ENCODE measurements at regions of chr3 and their contacts with region 1.

Region 1: GRCh38 chr3:153161138-153161713 is 800 bp upstream of the RAP2B start:
- DNase-seq: peak; percentile 100
- H3K4me3 ChIP-seq: peak overlapping the region; percentile 78 to 85 (median 82)
- H3K27ac ChIP-seq: peak overlapping the region; percentile 99
- H3K4me1 ChIP-seq: peaks cover 17% of the 10 kb centered on the region
- H3K27me3 ChIP-seq: no peaks in the 10 kb centered on the region
- CTCF ChIP-seq: no peak

Region 2: GRCh38 chr3:152943645-152944044 is 217.6 kb before region 1 on chr3:
- CTCF ChIA-PET with region 1: no interaction called
- dilution Hi-C with region 1: no loop called
- in situ Hi-C with region 1: no loop called
- intact Hi-C with region 1: no loop called
- DNase-seq: peak; percentile 25
- H3K4me3 ChIP-seq: no peak overlapping the region
- H3K27ac ChIP-seq: peak overlapping the region; percentile 10
- H3K4me1 ChIP-seq: peaks cover 21% of the 10 kb centered on the region
- H3K27me3 ChIP-seq: no peaks in the 10 kb centered on the region
- CTCF ChIP-seq: no peak

Region 3: DNA sequence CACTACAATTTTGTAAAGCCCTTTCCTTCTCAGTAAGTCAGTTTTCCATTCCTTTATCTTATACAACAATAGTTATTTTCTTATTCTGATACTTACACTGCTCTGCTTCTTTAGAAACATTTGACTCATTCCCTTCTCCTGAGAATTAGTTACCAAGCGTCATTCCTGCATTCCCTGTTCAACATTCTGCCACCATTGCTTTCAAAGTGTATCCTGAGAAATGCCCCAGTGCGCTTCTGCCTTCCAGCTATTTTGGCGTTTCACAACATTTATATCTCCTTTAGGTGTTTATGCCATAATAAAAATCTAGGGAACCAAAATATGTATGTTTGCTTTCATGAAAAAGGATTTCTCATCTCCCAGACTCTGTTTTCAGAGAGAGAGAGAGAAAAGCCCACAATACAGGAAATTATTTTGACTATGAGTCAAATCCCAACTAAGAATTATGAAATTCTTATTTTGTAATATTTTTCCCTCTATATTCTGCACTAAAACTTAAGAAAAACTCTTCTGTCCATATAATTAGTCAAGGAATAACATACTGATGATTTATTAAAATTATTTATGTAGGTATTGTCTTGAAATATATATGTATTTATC is 117.4 kb before region 1 on chr3:
- CTCF ChIA-PET with region 1: interaction called, 8 read pairs
- dilution Hi-C with region 1: no loop called
- in situ Hi-C with region 1: loop called in 1 of 2 experiments (anchors 10 kb)
- intact Hi-C with region 1: loop called (anchors 1 kb)
- DNase-seq: peak; percentile 71
- H3K4me3 ChIP-seq: peak overlapping the region in 1 of 3 experiments; percentile 25
- H3K27ac ChIP-seq: peak overlapping the region; percentile 94
- H3K4me1 ChIP-seq: peaks cover 20% of the 10 kb centered on the region
- H3K27me3 ChIP-seq: no peaks in the 10 kb centered on the region
- CTCF ChIP-seq: no peak

Region 4: DNA sequence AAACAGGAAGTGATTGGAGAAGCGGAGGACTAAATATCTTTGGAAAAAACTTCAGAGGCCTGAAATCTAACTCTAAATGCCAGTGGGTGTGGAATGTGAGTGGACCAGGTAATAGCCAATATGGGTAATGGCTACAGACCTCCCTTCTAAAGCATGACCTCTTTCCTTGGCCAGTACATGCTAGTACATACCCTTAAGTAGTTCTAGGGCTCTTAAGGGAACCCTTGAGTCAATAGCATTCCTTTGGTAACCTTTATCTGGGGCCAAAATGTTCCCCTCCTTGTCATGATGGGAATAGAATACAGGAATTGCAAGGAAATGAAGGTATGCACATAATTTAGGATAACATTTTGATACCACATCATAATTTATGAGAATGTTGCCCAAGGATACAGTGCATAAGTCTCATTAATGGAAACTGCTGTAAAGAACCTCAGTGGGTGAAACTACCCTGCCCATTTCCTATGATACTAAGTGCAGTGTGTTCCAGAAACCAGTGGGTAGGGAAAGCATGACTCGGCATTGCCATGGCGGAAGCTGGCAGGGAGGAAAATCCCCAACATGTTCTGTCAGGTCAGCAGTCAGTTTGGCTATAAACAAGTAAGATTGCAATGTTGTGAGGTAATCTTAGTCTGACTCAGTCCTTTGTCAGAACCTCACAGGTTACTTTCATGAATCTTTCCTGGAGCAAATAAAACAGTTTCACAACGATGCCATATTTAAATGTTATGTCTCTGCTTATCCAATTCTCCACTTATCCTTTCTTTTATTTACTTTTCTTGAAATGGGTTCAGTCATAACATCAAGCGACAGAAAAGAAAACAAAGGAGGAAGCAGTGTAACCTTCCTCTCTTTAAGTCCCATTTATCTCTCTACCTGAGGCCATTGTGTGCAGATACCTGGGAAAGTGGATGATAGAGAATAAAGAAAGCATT is 22.7 kb before region 1 on chr3:
- CTCF ChIA-PET with region 1: no interaction called
- dilution Hi-C with region 1: no loop called
- in situ Hi-C with region 1: no loop called
- intact Hi-C with region 1: loop called (anchors 1 kb)
- DNase-seq: peak; percentile 100
- H3K4me3 ChIP-seq: no peak overlapping the region
- H3K27ac ChIP-seq: peak overlapping the region; percentile 100
- H3K4me1 ChIP-seq: peaks cover 43% of the 10 kb centered on the region
- H3K27me3 ChIP-seq: no peaks in the 10 kb centered on the region
- CTCF ChIP-seq: no peak

Region 5: GRCh38 chr3:153221748-153222162 is 60.5 kb after region 1 on chr3:
- CTCF ChIA-PET with region 1: no interaction called
- dilution Hi-C with region 1: no loop called
- in situ Hi-C with region 1: no loop called
- intact Hi-C with region 1: loop called (anchors 5 kb)
- DNase-seq: peak; percentile 99
- H3K4me3 ChIP-seq: peak overlapping the region in 1 of 3 experiments; percentile 2
- H3K27ac ChIP-seq: peak overlapping the region; percentile 78
- H3K4me1 ChIP-seq: peaks cover 24% of the 10 kb centered on the region
- H3K27me3 ChIP-seq: no peaks in the 10 kb centered on the region
- CTCF ChIP-seq: no peak

Region 6: GRCh38 chr3:153291056-153291685 is 129.9 kb after region 1 on chr3:
- CTCF ChIA-PET with region 1: interaction called, 10 read pairs
- dilution Hi-C with region 1: no loop called
- in situ Hi-C with region 1: loop called in 1 of 2 experiments (anchors 10 kb)
- intact Hi-C with region 1: loop called (anchors 1 kb)
- DNase-seq: peak; percentile 31
- H3K4me3 ChIP-seq: no peak overlapping the region
- H3K27ac ChIP-seq: no peak overlapping the region
- H3K4me1 ChIP-seq: peaks cover 34% of the 10 kb centered on the region
- H3K27me3 ChIP-seq: no peaks in the 10 kb centered on the region
- CTCF ChIP-seq: peak; percentile 35 to 70

Region 7: DNA sequence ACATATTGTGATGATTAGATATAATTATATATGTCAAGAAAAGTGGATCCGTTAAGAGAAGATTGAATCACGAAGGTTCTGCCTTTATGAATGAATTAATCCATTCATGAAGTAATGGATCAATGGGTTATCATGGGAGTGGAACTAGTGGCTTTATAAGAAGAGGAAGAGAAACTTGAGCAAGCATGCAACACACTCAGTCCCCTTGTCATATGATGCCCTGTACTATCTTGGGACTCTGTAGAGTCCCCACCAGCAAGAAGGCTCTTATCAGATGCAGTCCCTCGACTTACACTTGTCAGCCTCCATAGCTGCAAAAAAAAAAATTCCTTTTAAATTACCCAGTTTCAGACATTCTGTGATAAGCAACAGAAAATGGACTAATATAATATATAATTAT is 302.7 kb after region 1 on chr3:
- CTCF ChIA-PET with region 1: no interaction called
- dilution Hi-C with region 1: no loop called
- in situ Hi-C with region 1: no loop called
- intact Hi-C with region 1: no loop called
- DNase-seq: no peak
- H3K4me3 ChIP-seq: no peak overlapping the region
- H3K27ac ChIP-seq: no peak overlapping the region
- H3K4me1 ChIP-seq: no peaks in the 10 kb centered on the region
- H3K27me3 ChIP-seq: peaks cover 2% of the 10 kb centered on the region
- CTCF ChIP-seq: no peak

Region 8: DNA sequence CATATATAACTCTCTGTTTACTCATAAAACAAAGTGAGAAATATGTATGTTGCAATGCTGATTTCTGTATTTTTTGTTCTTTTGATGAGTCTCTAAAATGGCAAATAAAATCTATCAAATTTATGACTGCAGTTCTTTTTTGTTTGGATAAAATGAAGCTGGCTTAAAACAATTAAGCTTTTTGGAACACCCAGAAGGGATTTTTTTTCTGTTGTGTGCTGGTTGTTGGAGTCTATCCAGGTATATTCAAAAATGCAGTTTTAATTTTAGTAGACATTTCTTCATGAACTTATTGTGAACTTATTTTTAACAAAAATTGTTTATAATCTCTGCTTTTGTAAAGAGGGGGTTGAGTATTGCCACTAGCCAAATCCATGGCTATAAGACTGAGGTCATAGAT is 406.3 kb after region 1 on chr3:
- CTCF ChIA-PET with region 1: no interaction called
- dilution Hi-C with region 1: no loop called
- in situ Hi-C with region 1: no loop called
- intact Hi-C with region 1: no loop called
- DNase-seq: no peak
- H3K4me3 ChIP-seq: no peak overlapping the region
- H3K27ac ChIP-seq: no peak overlapping the region
- H3K4me1 ChIP-seq: no peaks in the 10 kb centered on the region
- H3K27me3 ChIP-seq: no peaks in the 10 kb centered on the region
- CTCF ChIP-seq: no peak

Region 9: DNA sequence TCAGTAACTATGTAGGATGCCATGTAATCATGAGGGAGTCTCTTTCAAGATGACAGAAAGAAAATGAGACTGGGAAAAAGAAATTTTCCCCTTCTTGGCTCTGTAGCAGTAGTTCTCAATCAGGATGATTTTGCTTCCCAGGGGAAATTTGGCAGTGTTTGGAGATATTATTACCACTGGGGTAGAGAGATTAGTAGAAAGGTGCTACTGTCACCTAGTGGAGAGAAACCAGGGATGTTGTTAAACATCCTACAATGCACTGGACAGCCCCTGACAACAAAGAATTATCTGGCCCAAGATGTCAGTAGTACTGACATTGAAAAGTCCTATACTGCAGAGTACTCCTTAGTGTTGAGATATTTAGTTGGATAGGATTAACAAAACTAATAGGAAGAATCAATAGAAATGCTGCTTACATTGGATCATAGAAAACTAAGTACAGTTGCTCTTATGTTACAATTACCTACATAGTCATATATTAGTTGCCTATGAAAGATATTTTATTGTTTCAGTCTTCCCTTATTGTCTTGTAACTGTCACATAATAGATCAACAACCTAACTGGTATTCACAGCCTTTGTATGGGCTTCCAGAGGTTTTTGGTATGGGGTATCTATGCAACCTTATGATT is 434.1 kb after region 1 on chr3:
- CTCF ChIA-PET with region 1: no interaction called
- dilution Hi-C with region 1: no loop called
- in situ Hi-C with region 1: loop called in 1 of 2 experiments (anchors 25 kb)
- intact Hi-C with region 1: loop called (anchors 1 kb)
- DNase-seq: peak; percentile 45
- H3K4me3 ChIP-seq: no peak overlapping the region
- H3K27ac ChIP-seq: no peak overlapping the region
- H3K4me1 ChIP-seq: peaks cover 18% of the 10 kb centered on the region
- H3K27me3 ChIP-seq: no peaks in the 10 kb centered on the region
- CTCF ChIP-seq: peak; percentile 78 to 96

Region 10: DNA sequence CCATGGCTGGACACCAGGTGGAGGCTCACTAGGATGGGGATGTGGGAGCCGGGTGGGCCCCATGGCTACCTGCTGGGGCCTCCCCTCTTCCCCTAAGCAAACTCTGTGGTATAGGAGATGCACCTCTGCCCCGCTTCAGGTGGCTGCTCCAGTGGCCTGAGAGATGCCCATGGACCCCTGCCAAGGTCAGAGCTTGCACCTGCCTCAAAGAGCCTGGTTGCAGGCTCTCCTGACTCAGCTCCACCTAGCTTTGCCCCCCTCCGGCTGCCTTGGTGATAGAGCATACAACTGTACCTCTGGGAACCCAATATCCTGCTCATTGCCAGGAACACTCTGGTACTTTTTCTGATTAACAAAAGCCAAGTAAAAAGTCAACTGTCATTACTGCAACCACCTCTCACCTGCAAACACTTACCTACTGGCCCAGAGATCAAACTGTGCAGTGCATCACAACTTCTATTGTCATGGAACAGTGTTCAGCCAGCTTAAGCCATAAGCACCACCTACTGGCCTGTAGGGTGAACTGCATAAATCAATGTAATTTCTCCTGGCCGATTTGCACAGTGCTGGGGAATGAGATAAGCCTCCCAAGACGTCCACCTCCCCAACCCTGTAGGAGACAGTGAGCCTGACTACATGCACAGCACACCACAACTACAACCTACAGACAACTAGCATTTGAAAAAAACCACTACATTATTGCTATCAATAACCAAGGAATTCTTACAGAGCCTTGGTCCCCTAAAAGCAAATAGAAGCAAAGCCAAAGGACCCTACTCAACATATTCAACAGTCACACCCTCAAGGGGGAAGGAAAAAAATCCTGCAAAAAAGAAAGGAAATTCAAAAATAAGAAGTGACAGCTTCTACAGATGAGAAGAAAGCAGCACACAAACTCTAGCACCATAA is 607.6 kb after region 1 on chr3:
- CTCF ChIA-PET with region 1: no interaction called
- dilution Hi-C with region 1: no loop called
- in situ Hi-C with region 1: loop called in 1 of 2 experiments (anchors 25 kb)
- intact Hi-C with region 1: loop called (anchors 2 kb)
- DNase-seq: peak; percentile 46
- H3K4me3 ChIP-seq: no peak overlapping the region
- H3K27ac ChIP-seq: no peak overlapping the region
- H3K4me1 ChIP-seq: no peaks in the 10 kb centered on the region
- H3K27me3 ChIP-seq: no peaks in the 10 kb centered on the region
- CTCF ChIP-seq: peak; percentile 90 to 92

Region 11: DNA sequence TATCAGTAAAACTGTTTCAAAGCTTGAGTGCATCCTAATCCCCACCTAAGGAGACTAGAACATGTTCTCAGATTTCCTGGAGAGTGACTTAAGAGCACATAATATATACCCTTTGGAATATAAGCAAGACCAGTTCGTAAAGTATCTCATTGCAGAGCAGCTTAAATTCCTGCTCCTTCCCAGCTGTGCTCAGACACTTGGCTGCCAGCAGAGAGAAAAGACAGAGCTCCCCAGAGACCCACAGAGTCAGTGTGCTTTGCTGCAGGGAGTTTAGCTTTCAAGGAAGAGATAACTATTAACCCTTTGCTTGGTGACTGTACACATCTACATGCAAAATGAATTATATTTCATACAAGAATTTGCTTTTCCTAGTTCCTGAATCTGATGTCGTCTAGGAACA is 621.9 kb after region 1 on chr3:
- CTCF ChIA-PET with region 1: no interaction called
- dilution Hi-C with region 1: no loop called
- in situ Hi-C with region 1: no loop called
- intact Hi-C with region 1: no loop called
- DNase-seq: no peak
- H3K4me3 ChIP-seq: no peak overlapping the region
- H3K27ac ChIP-seq: no peak overlapping the region
- H3K4me1 ChIP-seq: no peaks in the 10 kb centered on the region
- H3K27me3 ChIP-seq: no peaks in the 10 kb centered on the region
- CTCF ChIP-seq: no peak